WTC11 (cell line): ENCODE measurements at regions of chr5 and their contacts with region 1.

Region 1: DNA sequence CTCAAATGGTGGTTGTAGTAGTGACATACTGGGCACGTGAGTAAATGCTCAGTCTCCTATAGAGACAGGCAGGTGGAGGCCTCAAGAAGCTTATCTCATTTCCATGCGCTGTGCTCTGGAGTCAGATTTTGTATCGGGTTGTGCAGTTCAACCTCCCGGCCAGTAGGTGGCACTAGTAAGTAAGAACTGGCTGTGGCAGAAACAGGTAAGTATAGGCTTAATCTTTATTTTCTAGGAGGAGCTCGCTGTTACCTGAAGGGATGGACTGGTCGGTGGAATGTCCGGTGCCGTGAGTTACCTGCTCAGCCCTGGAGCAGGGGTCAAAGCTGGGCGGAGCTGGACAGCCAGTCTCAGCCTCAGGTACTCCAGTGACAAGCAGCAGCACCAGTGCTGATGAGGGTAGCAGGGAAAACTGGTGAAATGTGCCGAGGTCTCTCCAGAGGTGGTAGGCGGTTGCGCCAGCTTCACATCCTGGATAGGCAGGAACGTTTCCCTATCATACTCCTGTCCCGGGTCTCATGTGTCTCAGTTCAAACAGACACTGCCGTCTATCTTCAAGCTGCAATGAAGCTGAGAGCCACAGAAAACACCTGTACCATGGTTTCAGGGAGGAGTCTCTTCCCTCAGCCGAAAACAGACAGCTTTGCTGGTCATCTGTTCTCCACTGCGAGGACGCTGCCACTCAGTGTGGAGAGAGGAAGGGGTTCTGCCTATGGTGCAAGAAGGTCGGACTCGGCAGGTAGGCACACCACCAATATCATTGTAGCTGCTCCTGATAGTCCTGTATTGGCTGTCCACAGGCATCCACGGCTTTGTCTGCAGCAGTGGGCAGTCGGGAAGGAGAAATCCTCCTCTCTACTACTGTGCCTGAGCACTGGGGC is 880.3 kb upstream of the SEMA6A start:
- DNase-seq: peak; percentile 73
- ATAC-seq: peak; percentile 86
- H3K4me3 Mint-ChIP-seq: peak overlapping the region; percentile 77
- H3K27ac Mint-ChIP-seq: no peak overlapping the region
- H3K4me1 Mint-ChIP-seq: peaks cover 3% of the 10 kb centered on the region; the same call in 1 of the 2 replicates
- H3K27me3 Mint-ChIP-seq: no peaks in the 10 kb centered on the region
- CTCF ChIP-seq: peak; percentile 84

Region 2: DNA sequence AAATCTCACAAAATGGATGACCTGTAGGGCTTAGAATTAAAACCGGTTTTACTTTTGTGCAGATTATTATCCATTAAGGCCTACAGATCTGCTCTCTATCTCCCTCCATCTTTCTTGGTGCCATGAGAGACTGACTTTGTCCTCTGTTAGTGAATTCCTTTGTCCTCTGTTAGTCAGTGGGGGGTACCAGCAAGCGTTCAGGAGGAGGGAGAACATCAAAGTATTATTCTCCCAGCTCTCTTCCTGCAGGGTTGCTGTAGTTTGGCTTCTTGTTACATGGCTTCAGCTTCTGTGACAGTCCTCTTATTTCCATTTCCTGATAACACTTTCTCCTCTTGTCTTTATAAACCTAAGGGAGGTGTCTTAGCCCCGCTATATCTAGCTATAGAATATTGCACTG is 29.8 kb before region 1 on chr5:
- CTCF ChIA-PET with region 1: interaction called, 15 read pairs
- POLR2A ChIA-PET with region 1: no interaction called
- DNase-seq: no peak
- ATAC-seq: peak; percentile 88
- H3K4me3 Mint-ChIP-seq: no peak overlapping the region
- H3K27ac Mint-ChIP-seq: 0 out of 2 replicates have a peak overlapping the region, but pooled peaks have one; percentile 28
- H3K4me1 Mint-ChIP-seq: peaks cover 17% of the 10 kb centered on the region
- H3K27me3 Mint-ChIP-seq: no peaks in the 10 kb centered on the region
- CTCF ChIP-seq: no peak

Region 3: DNA sequence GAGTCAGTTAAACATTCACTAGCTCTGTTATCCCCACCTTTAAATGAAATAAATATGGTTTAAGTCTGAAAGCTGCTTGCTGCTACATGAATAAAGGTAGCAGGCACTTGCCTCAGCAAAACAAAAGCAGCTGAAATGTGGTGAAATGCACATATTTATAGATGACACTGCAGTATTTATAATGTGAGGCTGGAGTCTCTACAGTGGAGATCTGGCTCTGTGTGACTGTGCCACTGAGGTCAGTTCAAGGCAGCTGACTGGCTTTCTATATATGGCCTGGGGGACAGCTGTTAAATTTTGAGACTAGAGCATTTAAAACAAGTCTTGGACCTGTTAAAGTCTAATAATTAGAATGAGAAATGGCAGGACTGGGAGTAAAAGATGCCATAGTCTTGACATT is 20.7 kb before region 1 on chr5:
- CTCF ChIA-PET with region 1: interaction called, 35 read pairs
- POLR2A ChIA-PET with region 1: no interaction called
- DNase-seq: no peak
- ATAC-seq: 0 out of 2 replicates have a peak, but pooled peaks have one; percentile 18
- H3K4me3 Mint-ChIP-seq: no peak overlapping the region
- H3K27ac Mint-ChIP-seq: no peak overlapping the region
- H3K4me1 Mint-ChIP-seq: peaks cover 40% of the 10 kb centered on the region
- H3K27me3 Mint-ChIP-seq: no peaks in the 10 kb centered on the region
- CTCF ChIP-seq: no peak

Region 4: GRCh38 chr5:117999939-118000549 is 545.1 kb after region 1 on chr5:
- CTCF ChIA-PET with region 1: no interaction called
- POLR2A ChIA-PET with region 1: no interaction called
- DNase-seq: no peak
- ATAC-seq: no peak
- H3K4me3 Mint-ChIP-seq: no peak overlapping the region
- H3K27ac Mint-ChIP-seq: no peak overlapping the region
- H3K4me1 Mint-ChIP-seq: no peaks in the 10 kb centered on the region
- H3K27me3 Mint-ChIP-seq: no peaks in the 10 kb centered on the region
- CTCF ChIP-seq: no peak